ENCODE measurements at regions of chr5 and their contacts with region 1.

Region 1: DNA sequence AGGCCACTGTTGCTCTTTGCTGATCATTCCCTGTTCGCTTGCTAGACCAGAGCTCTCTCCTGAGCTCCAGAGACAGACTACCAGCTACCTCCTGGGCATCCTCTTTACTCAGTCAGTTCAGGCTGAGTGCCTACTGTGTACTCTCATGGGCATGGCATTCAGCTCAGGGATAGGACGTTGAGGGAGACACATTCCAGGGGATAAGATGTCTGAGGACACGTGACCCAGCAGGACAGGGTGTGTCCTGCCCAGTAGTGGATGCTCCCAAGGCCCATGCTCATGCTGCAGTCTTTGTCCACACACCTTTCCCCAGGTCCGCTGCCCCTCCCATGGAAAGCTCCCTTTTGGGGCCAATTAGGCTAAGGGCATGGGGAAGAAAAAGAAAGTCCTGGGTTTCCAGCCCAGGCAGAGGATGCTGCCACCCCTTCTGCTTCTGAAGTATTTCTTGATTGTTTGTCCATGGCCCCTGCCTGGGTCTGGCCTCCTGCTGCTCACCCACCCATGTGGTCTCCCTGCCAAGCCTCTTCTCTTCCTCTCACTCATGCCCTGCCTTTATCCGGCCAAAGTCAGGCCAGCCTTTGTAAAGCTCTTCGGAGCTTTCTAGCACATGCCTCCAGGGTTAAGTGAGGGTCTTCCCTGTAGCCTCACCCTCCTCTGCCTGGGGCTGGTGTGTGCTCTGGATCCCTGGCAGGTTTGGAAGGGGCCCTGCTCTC is 60.5 kb upstream of the PITX1 start:
- DNase-seq: no peak
- H3K4me3 ChIP-seq: no peak overlapping the region
- H3K4me3 Mint-ChIP-seq: no peak overlapping the region
- H3K27ac Mint-ChIP-seq: peak overlapping the region; percentile 20
- H3K4me1 ChIP-seq: peaks cover 16% of the 10 kb centered on the region
- H3K4me1 Mint-ChIP-seq: peaks cover 15% of the 10 kb centered on the region
- H3K27me3 ChIP-seq: no peaks in the 10 kb centered on the region
- H3K27me3 Mint-ChIP-seq: no peaks in the 10 kb centered on the region
- CTCF ChIP-seq: no peak

Region 2: GRCh38 chr5:135047347-135047904 is 47.1 kb before region 1 on chr5:
- CTCF ChIA-PET with region 1: no interaction called
- POLR2A ChIA-PET with region 1: no interaction called
- intact Hi-C with region 1: loop called (anchors 1 kb)
- DNase-seq: peak; percentile 75 to 86
- H3K4me3 ChIP-seq: no peak overlapping the region
- H3K4me3 Mint-ChIP-seq: peak overlapping the region; percentile 45
- H3K27ac Mint-ChIP-seq: peak overlapping the region; percentile 95
- H3K4me1 ChIP-seq: peaks cover 31% of the 10 kb centered on the region
- H3K4me1 Mint-ChIP-seq: peaks cover 33% of the 10 kb centered on the region
- H3K27me3 ChIP-seq: no peaks in the 10 kb centered on the region
- H3K27me3 Mint-ChIP-seq: no peaks in the 10 kb centered on the region
- CTCF ChIP-seq: no peak

Measured in Caco-2 (cell line).